ENCODE measurements at regions of chr6 and their contacts with region 1.

Region 1: DNA sequence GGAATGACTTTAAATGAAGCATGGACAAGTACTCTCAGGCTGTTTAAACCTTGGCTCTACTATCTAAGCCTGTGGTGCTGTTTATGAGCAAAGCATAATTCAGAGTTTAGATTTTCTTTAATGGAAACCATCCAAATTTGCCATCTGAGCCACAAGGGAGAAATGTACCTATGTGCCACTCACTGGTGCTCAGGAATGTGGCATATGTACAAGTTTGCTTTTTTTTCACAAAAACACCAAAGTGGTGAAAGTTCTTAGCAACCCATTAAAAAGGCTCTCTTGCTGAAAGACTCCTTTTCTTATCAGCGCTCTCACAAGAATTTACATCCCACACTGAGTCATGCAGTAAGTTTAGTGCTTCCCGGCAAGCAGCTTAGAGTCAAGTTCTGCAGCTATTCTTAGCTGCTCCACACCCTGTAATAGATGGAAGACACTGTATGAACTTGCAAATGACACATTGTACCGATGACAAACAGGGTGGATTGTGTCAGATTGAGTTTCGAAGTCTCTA is 57.3 kb upstream of the MLIP start:
- DNase-seq: peak; percentile 76 to 80
- ATAC-seq: peak; percentile 95 to 96
- H3K4me3 ChIP-seq: peak overlapping the region; percentile 30 to 46 (median 36)
- H3K27ac ChIP-seq: peak overlapping the region; percentile 85 to 94 (median 92)
- H3K4me1 ChIP-seq: peaks cover 79 to 96% of the 10 kb centered on the region in 2 donors
- H3K27me3 ChIP-seq: no peaks in the 10 kb centered on the region
- CTCF ChIP-seq: no peak
- POLR2A ChIP-seq: peak; percentile 7 to 73

Region 2: DNA sequence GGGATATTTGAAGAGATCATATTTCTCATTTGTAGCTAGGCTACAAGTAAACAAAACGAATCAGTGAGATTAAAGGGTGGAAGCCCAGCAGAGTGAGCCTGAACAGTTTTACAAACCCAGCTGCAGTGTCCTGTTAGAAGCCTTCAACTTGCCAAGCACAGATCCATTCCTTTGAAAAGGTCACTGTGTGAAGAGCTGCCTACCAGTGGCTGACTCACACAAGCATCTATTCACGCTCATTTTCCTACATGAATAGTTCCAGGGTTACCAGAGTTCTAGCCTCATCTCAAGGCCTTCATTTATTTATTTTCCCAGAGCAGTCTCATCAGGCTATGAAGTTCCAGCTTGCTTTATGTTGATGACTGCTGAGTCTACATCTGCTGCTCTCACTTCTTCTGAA is 31.6 kb after region 1 on chr6:
- in situ Hi-C with region 1: no loop called
- intact Hi-C with region 1: loop called (anchors 2 kb)
- DNase-seq: peak; percentile 38 to 75
- ATAC-seq: peak; percentile 57 to 61
- H3K4me3 ChIP-seq: peak overlapping the region in 3 of 4 donors; percentile 8 to 57 (median 52)
- H3K27ac ChIP-seq: peak overlapping the region; percentile 90 to 97 (median 94)
- H3K4me1 ChIP-seq: peaks cover 58 to 67% of the 10 kb centered on the region in 2 donors
- H3K27me3 ChIP-seq: no peaks in the 10 kb centered on the region
- CTCF ChIP-seq: no peak
- POLR2A ChIP-seq: no peak

Region 3: GRCh38 chr6:54419885-54420284 is 365.9 kb after region 1 on chr6:
- in situ Hi-C with region 1: no loop called
- intact Hi-C with region 1: no loop called
- DNase-seq: no peak
- ATAC-seq: peak in 1 of 2 donors; percentile 56
- H3K4me3 ChIP-seq: no peak overlapping the region
- H3K27ac ChIP-seq: no peak overlapping the region
- H3K4me1 ChIP-seq: no peaks in the 10 kb centered on the region
- H3K27me3 ChIP-seq: no peaks in the 10 kb centered on the region
- CTCF ChIP-seq: no peak
- POLR2A ChIP-seq: no peak